ENCODE measurements at regions of chr2 and their contacts with region 1.

Region 1: DNA sequence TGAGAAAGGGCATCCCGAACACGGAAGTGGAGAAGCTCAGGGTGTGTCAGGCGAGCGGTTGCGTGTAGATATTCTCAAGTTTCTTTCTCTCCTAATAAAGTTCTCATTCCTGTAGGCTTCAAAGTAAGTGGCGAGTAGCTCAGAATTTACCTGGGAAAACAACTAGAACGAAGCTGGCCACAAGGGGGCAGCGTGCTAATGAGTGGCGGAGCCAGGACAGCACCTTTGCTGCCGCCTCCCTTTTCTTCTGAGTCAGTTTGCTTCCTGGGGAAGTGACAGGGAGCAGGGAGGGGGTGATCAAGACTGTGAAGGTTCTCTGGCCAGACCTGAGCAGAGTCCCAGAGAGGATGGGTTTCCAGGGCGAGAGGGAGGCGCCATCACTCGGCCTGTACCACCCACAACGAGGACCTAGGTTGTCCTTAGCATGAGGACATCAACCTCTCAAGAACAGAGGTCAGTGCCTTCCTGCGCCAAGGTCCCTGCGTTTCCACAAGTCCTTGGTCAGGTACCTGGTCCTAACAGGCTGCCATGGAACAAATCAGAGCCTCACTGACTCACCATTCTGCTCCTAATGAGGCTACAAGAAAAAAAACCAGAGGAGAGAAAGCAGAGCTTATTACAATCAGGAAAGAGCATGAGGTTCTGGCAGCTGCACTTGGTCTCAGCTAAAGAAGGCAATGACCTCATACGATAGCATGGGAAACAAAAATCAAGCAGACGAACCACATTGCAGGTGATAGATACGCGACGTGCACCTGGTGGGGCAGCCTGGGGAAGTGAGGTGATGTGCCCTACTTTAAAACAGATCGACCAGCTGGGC is 98.6 kb downstream of the PLB1 start:
- DNase-seq: peak; percentile 78 to 85 (median 80)
- H3K4me3 ChIP-seq: peak overlapping the region in 1 of 2 donors; percentile 9
- H3K4me3 Mint-ChIP-seq: peak overlapping the region; percentile 63 to 77 (median 70)
- H3K27ac ChIP-seq: peak overlapping the region; percentile 70
- H3K27ac Mint-ChIP-seq: peak overlapping the region; percentile 92 to 98 (median 97)
- H3K4me1 ChIP-seq: peaks cover 18% of the 10 kb centered on the region
- H3K4me1 Mint-ChIP-seq: peaks cover 13 to 23% (median 16%) of the 10 kb centered on the region in 4 donors
- H3K27me3 ChIP-seq: no peaks in the 10 kb centered on the region
- H3K27me3 Mint-ChIP-seq: no peaks in the 10 kb centered on the region

Region 2: DNA sequence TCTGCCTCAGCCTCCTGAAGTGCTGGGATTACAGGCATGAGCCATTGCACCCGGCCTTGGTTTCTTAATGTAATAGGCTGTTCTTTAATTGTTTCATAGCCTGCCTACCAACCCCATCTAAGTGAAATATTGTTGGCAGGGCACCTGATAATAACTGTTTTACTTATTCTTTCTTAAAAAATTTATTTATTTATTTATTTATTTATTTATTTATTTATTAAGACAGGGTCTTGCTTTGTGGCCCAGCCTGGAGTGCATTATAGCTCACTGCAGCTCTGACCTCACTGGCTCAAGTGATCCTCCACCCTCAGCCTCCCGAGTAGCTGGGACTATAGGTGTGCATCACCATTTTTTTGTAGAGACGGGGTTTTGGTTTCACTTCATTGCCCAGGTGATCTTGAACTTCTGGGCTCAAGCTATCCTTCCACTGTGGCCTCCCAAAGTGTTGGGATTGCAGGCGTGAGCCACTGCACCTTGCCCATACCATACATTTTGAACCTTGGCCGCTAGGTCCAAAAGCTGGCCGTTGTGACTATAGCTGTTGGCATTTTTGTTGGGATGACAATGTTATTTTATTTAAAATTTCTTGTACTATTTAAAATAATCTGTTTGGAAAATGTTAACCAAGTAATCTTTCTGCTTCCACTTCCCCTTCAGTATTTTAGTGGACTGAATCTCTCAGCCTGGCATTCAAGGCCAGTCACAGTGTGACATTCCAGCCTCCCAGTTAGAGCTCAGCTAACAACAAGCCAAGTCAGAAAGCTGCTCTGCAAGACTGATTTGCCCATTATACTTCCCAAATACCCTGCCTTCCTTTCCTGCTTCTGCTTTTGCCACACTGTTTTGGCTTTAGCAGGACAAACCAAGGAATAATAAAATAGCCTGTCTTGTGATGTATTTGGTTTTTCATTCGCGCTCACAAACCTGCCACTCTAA is 651.6 kb before region 1 on chr2:
- CTCF ChIA-PET with region 1: no interaction called
- POLR2A ChIA-PET with region 1: no interaction called
- intact Hi-C with region 1: no loop called
- DNase-seq: no peak
- H3K4me3 ChIP-seq: no peak overlapping the region
- H3K4me3 Mint-ChIP-seq: no peak overlapping the region
- H3K27ac ChIP-seq: no peak overlapping the region
- H3K27ac Mint-ChIP-seq: peak overlapping the region in 1 of 7 donors; percentile 12
- H3K4me1 ChIP-seq: peaks cover 3% of the 10 kb centered on the region
- H3K4me1 Mint-ChIP-seq: peaks cover 5 to 15% (median 11%) of the 10 kb centered on the region in 4 donors
- H3K27me3 ChIP-seq: no peaks in the 10 kb centered on the region
- H3K27me3 Mint-ChIP-seq: no peaks in the 10 kb centered on the region

Region 3: GRCh38 chr2:28521663-28522062 is 72.8 kb before region 1 on chr2:
- CTCF ChIA-PET with region 1: no interaction called
- POLR2A ChIA-PET with region 1: no interaction called
- intact Hi-C with region 1: no loop called
- DNase-seq: no peak
- H3K4me3 ChIP-seq: no peak overlapping the region
- H3K4me3 Mint-ChIP-seq: peak overlapping the region in 1 of 8 donors; percentile 7
- H3K27ac ChIP-seq: no peak overlapping the region
- H3K27ac Mint-ChIP-seq: no peak overlapping the region
- H3K4me1 ChIP-seq: no peaks in the 10 kb centered on the region
- H3K4me1 Mint-ChIP-seq: no peaks in the 10 kb centered on the region
- H3K27me3 ChIP-seq: no peaks in the 10 kb centered on the region
- H3K27me3 Mint-ChIP-seq: peaks cover 31 to 49% of the 10 kb centered on the region in 2 donors

Region 4: GRCh38 chr2:28583899-28584553 is 10.5 kb before region 1 on chr2:
- CTCF ChIA-PET with region 1: interaction called, 61 read pairs
- POLR2A ChIA-PET with region 1: interaction called, 8 read pairs
- intact Hi-C with region 1: no loop called
- DNase-seq: peak in 1 of 5 donors; percentile 45
- H3K4me3 ChIP-seq: no peak overlapping the region
- H3K4me3 Mint-ChIP-seq: no peak overlapping the region
- H3K27ac ChIP-seq: no peak overlapping the region
- H3K27ac Mint-ChIP-seq: peak overlapping the region in 1 of 7 donors; percentile 81
- H3K4me1 ChIP-seq: peaks cover 28% of the 10 kb centered on the region
- H3K4me1 Mint-ChIP-seq: peaks cover 16 to 37% (median 25%) of the 10 kb centered on the region in 4 donors
- H3K27me3 ChIP-seq: no peaks in the 10 kb centered on the region
- H3K27me3 Mint-ChIP-seq: no peaks in the 10 kb centered on the region

Region 5: GRCh38 chr2:28633746-28634145 is 39.2 kb after region 1 on chr2:
- CTCF ChIA-PET with region 1: interaction called, 18 read pairs
- POLR2A ChIA-PET with region 1: interaction called, 3 read pairs
- intact Hi-C with region 1: no loop called
- DNase-seq: no peak
- H3K4me3 ChIP-seq: no peak overlapping the region
- H3K4me3 Mint-ChIP-seq: no peak overlapping the region
- H3K27ac ChIP-seq: no peak overlapping the region
- H3K27ac Mint-ChIP-seq: peak overlapping the region in 6 of 7 donors; percentile 14 to 77 (median 64)
- H3K4me1 ChIP-seq: no peaks in the 10 kb centered on the region
- H3K4me1 Mint-ChIP-seq: peaks cover 0 to 16% (median 4%) of the 10 kb centered on the region in 4 donors
- H3K27me3 ChIP-seq: no peaks in the 10 kb centered on the region
- H3K27me3 Mint-ChIP-seq: no peaks in the 10 kb centered on the region

Region 6: DNA sequence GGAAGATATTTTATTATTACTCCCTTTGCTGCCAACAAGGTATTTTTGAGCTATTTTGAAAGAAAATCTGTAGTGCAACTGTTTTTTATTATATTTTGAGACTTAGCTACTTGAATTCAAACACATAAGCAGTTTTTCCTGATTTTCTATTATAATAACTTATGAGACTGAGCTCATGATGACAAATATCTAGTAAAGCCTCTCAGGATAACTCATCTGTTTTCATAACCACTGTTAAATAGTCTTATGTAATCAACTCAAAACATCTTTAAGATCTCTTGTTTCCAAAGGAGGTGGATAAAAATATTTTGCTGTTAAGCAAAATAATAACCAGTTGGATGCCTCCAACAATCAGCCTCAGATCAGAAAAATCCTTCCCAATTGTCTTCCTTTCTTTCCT is 135.2 kb after region 1 on chr2:
- CTCF ChIA-PET with region 1: interaction called, 11 read pairs
- POLR2A ChIA-PET with region 1: no interaction called
- intact Hi-C with region 1: no loop called
- DNase-seq: no peak
- H3K4me3 ChIP-seq: no peak overlapping the region
- H3K4me3 Mint-ChIP-seq: no peak overlapping the region
- H3K27ac ChIP-seq: no peak overlapping the region
- H3K27ac Mint-ChIP-seq: no peak overlapping the region
- H3K4me1 ChIP-seq: no peaks in the 10 kb centered on the region
- H3K4me1 Mint-ChIP-seq: peaks cover 0 to 5% (median 2%) of the 10 kb centered on the region in 4 donors
- H3K27me3 ChIP-seq: no peaks in the 10 kb centered on the region
- H3K27me3 Mint-ChIP-seq: no peaks in the 10 kb centered on the region

Region 7: GRCh38 chr2:28764909-28765711 is 170.6 kb after region 1 on chr2:
- CTCF ChIA-PET with region 1: interaction called, 299 read pairs
- POLR2A ChIA-PET with region 1: interaction called, 3 read pairs
- intact Hi-C with region 1: no loop called
- DNase-seq: no peak
- H3K4me3 ChIP-seq: no peak overlapping the region
- H3K4me3 Mint-ChIP-seq: peak overlapping the region in 7 of 8 donors; percentile 17 to 73 (median 27)
- H3K27ac ChIP-seq: no peak overlapping the region
- H3K27ac Mint-ChIP-seq: peak overlapping the region in 5 of 7 donors; percentile 22 to 77 (median 54)
- H3K4me1 ChIP-seq: peaks cover 97% of the 10 kb centered on the region
- H3K4me1 Mint-ChIP-seq: peaks cover 54 to 99% (median 74%) of the 10 kb centered on the region in 4 donors
- H3K27me3 ChIP-seq: no peaks in the 10 kb centered on the region
- H3K27me3 Mint-ChIP-seq: no peaks in the 10 kb centered on the region

Region 8: DNA sequence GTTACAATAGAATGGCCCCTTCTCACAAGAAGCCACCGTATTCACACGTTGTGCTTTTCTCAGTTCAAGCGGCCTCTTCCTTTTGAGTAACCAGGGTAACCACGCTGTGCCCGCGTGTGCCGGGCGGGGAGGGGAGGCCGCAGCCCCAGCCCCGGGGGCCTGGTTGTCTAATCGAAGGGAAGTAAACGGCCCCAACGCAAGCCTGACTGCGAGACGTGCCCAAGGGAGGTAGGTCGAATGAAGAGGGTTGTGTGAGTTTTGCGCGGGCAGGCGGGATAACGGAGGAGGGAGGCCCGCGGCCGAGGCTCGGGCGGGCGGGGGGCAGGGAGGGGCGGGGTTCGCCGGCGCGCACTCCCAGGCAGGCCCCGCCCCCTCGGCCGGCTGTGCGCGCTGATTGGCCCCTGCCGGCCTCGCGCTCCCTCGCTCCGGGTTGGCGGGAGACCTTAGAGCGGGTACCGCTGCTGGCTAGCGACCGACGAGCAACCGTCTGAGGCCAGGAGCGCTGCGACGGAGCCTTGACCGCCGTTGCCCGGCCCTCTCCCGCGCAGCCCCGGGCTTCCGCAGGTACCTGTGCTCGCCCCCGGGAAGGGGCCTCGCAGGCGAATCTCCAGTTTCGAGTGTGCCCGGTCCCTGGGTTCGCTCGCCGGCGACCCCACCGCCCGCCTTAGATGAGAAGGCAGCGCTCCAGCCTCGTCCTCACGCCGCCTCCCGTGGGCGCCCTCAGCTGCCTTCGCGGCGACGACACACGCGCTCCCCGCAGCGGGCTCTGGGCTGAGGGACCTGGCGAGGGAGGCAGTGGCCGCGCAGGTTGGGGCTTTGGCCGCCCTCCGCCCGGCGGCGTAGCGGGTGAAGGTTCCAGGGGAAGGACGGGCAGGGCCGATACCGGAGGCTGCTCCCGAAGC is 216.1 kb after region 1 on chr2 and contains the start of gene SPDYA:
- CTCF ChIA-PET with region 1: interaction called, 10 read pairs
- POLR2A ChIA-PET with region 1: no interaction called
- intact Hi-C with region 1: no loop called
- DNase-seq: peak; percentile 76 to 81 (median 79)
- H3K4me3 ChIP-seq: peak within 1 kb of the TSS in 1 of 2 donors; percentile 60
- H3K4me3 Mint-ChIP-seq: peak within 1 kb of the TSS; percentile 79 to 91 (median 84)
- H3K27ac ChIP-seq: peak within 1 kb of the TSS; percentile 41
- H3K27ac Mint-ChIP-seq: peak within 1 kb of the TSS; percentile 73 to 88 (median 84)
- H3K4me1 ChIP-seq: peaks cover 13% of the 10 kb centered on the region
- H3K4me1 Mint-ChIP-seq: peaks cover 5 to 16% (median 11%) of the 10 kb centered on the region in 4 donors
- H3K27me3 ChIP-seq: no peaks in the 10 kb centered on the region
- H3K27me3 Mint-ChIP-seq: no peaks in the 10 kb centered on the region
- total RNA-seq, gene SPDYA: 4.5 to 4.9 TPM

Region 9: DNA sequence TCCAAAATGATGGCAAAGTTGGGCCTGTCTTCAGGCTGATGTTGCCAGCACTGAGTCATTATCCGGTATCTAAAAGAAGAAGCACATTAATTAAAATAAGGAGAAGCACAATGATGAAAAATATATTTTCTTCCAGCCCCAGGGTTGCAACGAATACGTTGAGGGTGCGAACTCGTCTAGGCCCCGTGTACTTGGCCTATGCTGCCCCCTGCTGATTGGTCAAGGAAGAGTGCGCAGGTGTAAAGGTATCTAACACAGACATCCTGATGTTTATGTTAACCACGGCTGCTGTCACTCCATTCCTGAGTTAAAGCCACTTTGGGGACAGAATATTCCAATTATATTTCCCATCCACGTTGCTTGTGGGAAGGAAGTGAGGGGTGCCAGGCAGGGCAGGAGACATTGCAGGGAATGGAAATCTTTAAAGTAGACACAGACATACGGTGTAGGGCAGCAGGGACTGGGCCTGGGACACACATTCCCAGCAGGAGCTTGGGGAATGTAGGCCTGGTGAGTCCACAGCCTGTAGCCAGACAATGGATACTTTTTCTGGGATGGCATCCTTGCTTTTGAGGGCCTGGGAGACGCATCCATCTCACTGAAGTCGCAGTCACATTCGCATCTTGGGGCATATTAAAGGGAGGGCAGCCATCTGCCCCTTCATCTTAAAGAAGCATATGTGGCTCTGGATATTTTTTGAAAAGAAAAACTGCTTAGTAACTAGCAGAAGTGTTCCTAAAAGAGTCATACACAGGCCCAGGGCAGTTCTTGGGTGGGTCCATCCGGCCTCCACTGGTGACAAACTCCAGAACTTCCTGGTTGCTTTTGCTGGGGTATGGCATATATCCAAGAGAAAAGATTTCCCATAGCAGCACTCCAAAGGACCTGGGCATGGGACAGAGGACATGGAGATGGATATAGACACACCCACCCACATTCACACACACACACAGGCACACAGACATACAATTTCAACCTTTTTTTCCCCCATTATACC is 602.6 kb after region 1 on chr2:
- CTCF ChIA-PET with region 1: no interaction called
- POLR2A ChIA-PET with region 1: no interaction called
- intact Hi-C with region 1: no loop called
- DNase-seq: peak; percentile 66 to 79 (median 71)
- H3K4me3 ChIP-seq: no peak overlapping the region
- H3K4me3 Mint-ChIP-seq: no peak overlapping the region
- H3K27ac ChIP-seq: no peak overlapping the region
- H3K27ac Mint-ChIP-seq: peak overlapping the region in 2 of 7 donors; percentile 15 to 81
- H3K4me1 ChIP-seq: no peaks in the 10 kb centered on the region
- H3K4me1 Mint-ChIP-seq: peaks cover 0 to 9% (median 1%) of the 10 kb centered on the region in 4 donors
- H3K27me3 ChIP-seq: no peaks in the 10 kb centered on the region
- H3K27me3 Mint-ChIP-seq: no peaks in the 10 kb centered on the region